T-cell (primary cell): ENCODE measurements at regions of chr18 and their contacts with region 1.

Region 1: GRCh38 chr18:3447895-3448837 is 1.8 kb upstream of the TGIF1 start:
- DNase-seq: peak; percentile 59 to 92 (median 84)
- ATAC-seq: peak; percentile 41 to 63 (median 48)
- H3K4me3 ChIP-seq: peak overlapping the region; percentile 70 to 85
- H3K4me3 Mint-ChIP-seq: peak overlapping the region; percentile 91 to 95 (median 94)
- H3K27ac ChIP-seq: peak overlapping the region; percentile 100
- H3K27ac Mint-ChIP-seq: peak overlapping the region; percentile 99
- H3K4me1 ChIP-seq: peaks cover 11 to 56% of the 10 kb centered on the region in 2 experiments
- H3K4me1 Mint-ChIP-seq: peaks cover 18 to 35% (median 31%) of the 10 kb centered on the region in 3 donors
- H3K27me3 ChIP-seq: no peaks in the 10 kb centered on the region
- H3K27me3 Mint-ChIP-seq: no peaks in the 10 kb centered on the region

Region 2: GRCh38 chr18:3297025-3297984 is 150.9 kb before region 1 on chr18:
- CTCF ChIA-PET with region 1: interaction called, 7 to 12 read pairs
- POLR2A ChIA-PET with region 1: interaction called, 3 to 11 read pairs
- DNase-seq: peak; percentile 84 to 95 (median 91)
- ATAC-seq: peak; percentile 95 to 100 (median 98)
- H3K4me3 ChIP-seq: peak overlapping the region; percentile 73 to 77
- H3K4me3 Mint-ChIP-seq: peak overlapping the region; percentile 93 to 94 (median 94)
- H3K27ac ChIP-seq: no peak overlapping the region
- H3K27ac Mint-ChIP-seq: peak overlapping the region; percentile 82 to 90
- H3K4me1 ChIP-seq: peaks cover 4 to 14% of the 10 kb centered on the region in 2 experiments
- H3K4me1 Mint-ChIP-seq: peaks cover 11 to 14% (median 13%) of the 10 kb centered on the region in 3 donors
- H3K27me3 ChIP-seq: peaks cover 0 to 4% of the 10 kb centered on the region in 2 experiments
- H3K27me3 Mint-ChIP-seq: peaks cover 29 to 32% of the 10 kb centered on the region in 2 donors

Region 3: DNA sequence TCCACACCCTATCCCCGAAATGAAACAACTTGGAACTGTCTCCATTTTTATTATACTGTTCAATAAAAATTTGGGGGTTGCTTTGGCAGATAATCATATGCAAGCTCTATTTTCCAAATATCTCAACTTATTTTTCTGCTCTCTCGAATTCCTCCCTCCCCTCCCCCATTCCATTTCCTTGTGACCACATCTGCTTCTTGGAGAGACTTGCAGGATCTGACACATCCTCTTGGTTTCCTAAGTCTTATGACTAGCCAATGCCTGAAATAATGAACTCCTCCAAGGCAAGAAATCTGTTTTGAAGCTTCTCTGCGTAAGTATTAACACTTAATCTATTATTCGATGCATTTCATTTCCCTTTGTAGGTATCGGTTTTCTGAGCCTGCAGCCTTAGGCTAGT is 17.9 kb after region 1 on chr18:
- CTCF ChIA-PET with region 1: interaction called, 10 to 25 read pairs
- POLR2A ChIA-PET with region 1: interaction called, 3 to 10 read pairs
- DNase-seq: no peak
- ATAC-seq: no peak
- H3K4me3 ChIP-seq: no peak overlapping the region
- H3K4me3 Mint-ChIP-seq: peak overlapping the region in 1 of 3 donors; percentile 12
- H3K27ac ChIP-seq: no peak overlapping the region
- H3K27ac Mint-ChIP-seq: peak overlapping the region; percentile 73 to 75
- H3K4me1 ChIP-seq: peaks cover 10 to 13% of the 10 kb centered on the region in 2 experiments
- H3K4me1 Mint-ChIP-seq: peaks cover 16 to 21% (median 17%) of the 10 kb centered on the region in 3 donors
- H3K27me3 ChIP-seq: no peaks in the 10 kb centered on the region
- H3K27me3 Mint-ChIP-seq: no peaks in the 10 kb centered on the region

Region 4: DNA sequence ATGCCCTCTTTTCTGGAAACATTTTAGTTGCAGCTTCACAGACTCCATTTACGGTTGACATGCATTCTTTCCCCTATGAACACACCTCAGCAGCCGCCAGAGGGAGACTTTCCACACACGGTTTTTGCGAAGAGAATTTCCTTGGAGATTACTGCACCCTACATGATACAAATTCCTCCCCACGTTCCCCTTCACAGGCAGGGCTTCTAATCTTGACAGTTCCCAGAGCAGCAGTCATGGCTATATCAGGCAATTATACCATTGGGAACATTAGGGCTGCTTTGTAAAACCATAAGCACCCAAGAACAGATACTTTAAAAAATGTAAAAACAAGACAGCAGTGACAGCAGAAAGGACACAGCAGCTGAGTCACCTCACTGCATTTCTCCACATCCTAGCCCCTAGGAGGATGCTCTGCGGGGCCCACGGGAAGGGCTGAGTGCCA is 255.6 kb after region 1 on chr18:
- CTCF ChIA-PET with region 1: no interaction called
- POLR2A ChIA-PET with region 1: no interaction called
- DNase-seq: peak in 10 of 35 experiments; percentile 1 to 22 (median 9)
- ATAC-seq: no peak
- H3K4me3 ChIP-seq: no peak overlapping the region
- H3K4me3 Mint-ChIP-seq: no peak overlapping the region
- H3K27ac ChIP-seq: no peak overlapping the region
- H3K27ac Mint-ChIP-seq: no peak overlapping the region
- H3K4me1 ChIP-seq: no peaks in the 10 kb centered on the region
- H3K4me1 Mint-ChIP-seq: peaks cover 0 to 4% (median 3%) of the 10 kb centered on the region in 3 donors
- H3K27me3 ChIP-seq: peaks cover 0 to 37% of the 10 kb centered on the region in 2 experiments
- H3K27me3 Mint-ChIP-seq: peaks cover 27 to 61% of the 10 kb centered on the region in 2 donors